ENCODE measurements at regions of chr13 and their contacts with region 1.

Region 1: GRCh38 chr13:25001476-25002206 is 94.3 kb upstream of the PABPC3 start:
- DNase-seq: no peak
- H3K4me3 ChIP-seq: no peak overlapping the region
- H3K27ac ChIP-seq: no peak overlapping the region
- H3K27me3 ChIP-seq: peaks cover 0 to 7% (median 0%) of the 10 kb centered on the region in 45 donors
- CTCF ChIP-seq: no peak

Region 2: GRCh38 chr13:25037057-25037813 is 35.6 kb after region 1 on chr13:
- intact Hi-C with region 1: loop called (anchors 2 kb)
- DNase-seq: peak in 8 of 10 donors; percentile 50 to 70 (median 62)
- H3K4me3 ChIP-seq: no peak overlapping the region
- H3K27ac ChIP-seq: peak overlapping the region in 2 of 59 donors; percentile 21 to 27
- H3K27me3 ChIP-seq: peaks cover 0 to 14% (median 0%) of the 10 kb centered on the region in 45 donors
- CTCF ChIP-seq: peak; percentile 69 to 95 (median 86)

Region 3: DNA sequence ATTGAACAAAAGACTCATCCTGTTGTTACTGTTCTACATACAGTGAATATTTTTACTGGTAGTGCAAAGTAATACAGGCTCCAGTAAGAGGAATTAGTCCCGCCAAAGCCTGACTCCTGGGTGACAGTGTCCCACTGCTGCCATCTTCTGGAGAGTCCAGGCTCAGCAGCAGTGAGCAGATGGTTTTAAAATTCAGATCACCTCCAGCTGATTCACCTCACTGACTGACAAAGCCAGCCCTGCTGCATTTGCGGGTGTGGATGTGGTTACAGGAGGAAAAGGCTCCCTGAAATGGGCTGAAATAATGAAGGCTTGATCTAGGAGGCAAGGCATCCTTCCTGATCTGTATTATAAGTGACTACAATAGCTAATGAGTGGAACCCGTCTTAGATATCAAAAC is 112.6 kb after region 1 on chr13:
- intact Hi-C with region 1: loop called in 1 of 2 experiments (anchors 10 kb)
- DNase-seq: peak; percentile 72 to 89 (median 85)
- H3K4me3 ChIP-seq: peak overlapping the region in 16 of 59 donors; percentile 2 to 40 (median 16)
- H3K27ac ChIP-seq: peak overlapping the region in 37 of 59 donors; percentile 5 to 74 (median 50)
- H3K27me3 ChIP-seq: no peaks in the 10 kb centered on the region
- CTCF ChIP-seq: peak; percentile 64 to 99 (median 91)